BJ (cell line): ENCODE measurements at regions of chr10 and their contacts with region 1.

Region 1: GRCh38 chr10:14195433-14195832 is 135.3 kb downstream of the FRMD4A start:
- DNase-seq: no peak
- H3K4me3 ChIP-seq: no peak overlapping the region
- H3K27me3 ChIP-seq: peaks cover 15% of the 10 kb centered on the region
- CTCF ChIP-seq: no peak

Region 2: DNA sequence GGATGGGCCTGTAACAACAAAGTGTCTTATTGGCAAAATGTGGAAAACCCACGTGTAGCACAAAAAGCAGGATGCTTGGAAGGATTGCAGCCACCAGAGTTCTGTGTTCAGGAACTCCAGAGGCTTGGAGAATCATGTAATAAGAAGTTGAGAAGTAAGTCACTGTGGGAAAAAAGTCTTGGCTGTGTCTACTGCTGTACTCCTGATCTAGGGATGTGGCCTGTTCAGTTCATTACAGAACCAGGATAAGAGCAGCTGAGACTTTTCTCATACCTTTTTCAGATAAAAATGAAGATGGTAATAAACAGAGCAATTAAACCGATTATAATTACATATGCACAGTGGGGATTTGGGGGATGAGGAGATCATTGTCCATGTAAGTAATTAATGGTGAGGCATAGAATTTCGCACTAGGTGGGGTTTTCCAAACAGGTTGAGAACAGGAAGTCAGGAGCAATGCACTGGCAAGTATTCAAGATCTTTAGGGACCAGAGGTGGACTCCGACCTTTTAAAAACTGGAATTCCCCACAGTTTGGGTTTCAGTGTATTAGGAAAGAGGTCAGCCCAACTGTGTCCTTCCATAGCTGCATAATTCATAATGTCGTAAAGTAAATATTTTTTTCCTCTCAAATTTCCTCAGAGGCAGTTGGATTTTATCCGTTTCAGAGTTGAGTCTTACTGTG is 146.4 kb before region 1 on chr10:
- CTCF ChIA-PET with region 1: no interaction called
- POLR2A ChIA-PET with region 1: no interaction called
- DNase-seq: no peak
- H3K4me3 ChIP-seq: no peak overlapping the region
- H3K27me3 ChIP-seq: no peaks in the 10 kb centered on the region
- CTCF ChIP-seq: no peak

Region 3: GRCh38 chr10:14173706-14174594 is 21.5 kb before region 1 on chr10:
- CTCF ChIA-PET with region 1: interaction called, 12 read pairs
- POLR2A ChIA-PET with region 1: no interaction called
- DNase-seq: no peak
- H3K4me3 ChIP-seq: peak overlapping the region; percentile 39
- H3K27me3 ChIP-seq: peaks cover 25% of the 10 kb centered on the region
- CTCF ChIP-seq: no peak

Region 4: GRCh38 chr10:14225379-14226150 is 30.1 kb after region 1 on chr10:
- CTCF ChIA-PET with region 1: interaction called, 13 read pairs
- POLR2A ChIA-PET with region 1: no interaction called
- DNase-seq: no peak
- H3K4me3 ChIP-seq: no peak overlapping the region
- H3K27me3 ChIP-seq: peaks cover 10% of the 10 kb centered on the region
- CTCF ChIP-seq: no peak